Activated naive CD8-positive, alpha-beta T cell treated with anti-CD3 and anti-CD28 coated beads, Interleukin-2, amount 10 ng/mL, durations not matched to agents 7 days and 5 days (primary cell): ENCODE measurements at regions of chr16 and their contacts with region 1.

Region 1: DNA sequence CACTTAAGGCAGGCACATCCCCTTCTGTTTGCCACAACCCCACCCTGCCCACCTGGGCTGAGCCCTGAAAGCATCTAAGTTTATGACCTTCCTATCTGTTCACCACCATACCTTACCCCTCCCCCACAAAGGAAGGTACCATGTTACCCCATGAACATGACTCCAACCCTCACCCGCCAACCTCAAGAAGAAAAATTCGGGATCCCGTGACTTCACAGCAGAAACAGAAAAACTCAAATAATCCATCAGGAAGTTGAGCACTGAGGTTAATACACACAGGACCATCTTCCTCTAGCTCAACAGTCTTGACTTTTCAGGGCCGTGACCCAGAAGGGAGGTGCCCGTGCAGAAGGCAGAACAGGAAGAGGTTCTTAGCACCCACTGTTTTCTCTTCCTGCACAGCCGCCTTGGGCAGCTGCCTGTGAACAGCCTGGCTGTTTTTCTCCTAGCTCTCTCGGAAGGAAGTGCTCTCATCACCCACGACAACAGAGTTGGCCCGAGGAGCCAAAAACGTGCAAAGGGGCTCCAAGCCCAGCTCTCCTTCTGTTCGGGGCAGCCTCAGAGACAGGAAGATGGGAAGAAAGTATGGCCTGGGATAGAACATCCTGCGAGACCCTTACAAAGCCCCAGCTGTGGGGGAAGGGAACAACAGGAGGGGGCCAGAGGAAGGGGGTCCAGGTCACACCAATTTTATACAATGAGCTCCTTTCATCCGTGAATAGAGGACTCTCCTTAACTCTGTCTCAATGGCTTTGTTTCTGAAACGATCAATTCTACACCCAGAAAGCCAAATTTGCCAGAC is 101.1 kb downstream of the XYLT1 start:
- DNase-seq: peak; percentile 69
- ATAC-seq: peak; percentile 84
- H3K4me3 Mint-ChIP-seq: peak overlapping the region; percentile 79
- H3K27ac Mint-ChIP-seq: peak overlapping the region; percentile 95
- H3K4me1 Mint-ChIP-seq: peaks cover 77% of the 10 kb centered on the region
- H3K27me3 Mint-ChIP-seq: no peaks in the 10 kb centered on the region

Region 2: DNA sequence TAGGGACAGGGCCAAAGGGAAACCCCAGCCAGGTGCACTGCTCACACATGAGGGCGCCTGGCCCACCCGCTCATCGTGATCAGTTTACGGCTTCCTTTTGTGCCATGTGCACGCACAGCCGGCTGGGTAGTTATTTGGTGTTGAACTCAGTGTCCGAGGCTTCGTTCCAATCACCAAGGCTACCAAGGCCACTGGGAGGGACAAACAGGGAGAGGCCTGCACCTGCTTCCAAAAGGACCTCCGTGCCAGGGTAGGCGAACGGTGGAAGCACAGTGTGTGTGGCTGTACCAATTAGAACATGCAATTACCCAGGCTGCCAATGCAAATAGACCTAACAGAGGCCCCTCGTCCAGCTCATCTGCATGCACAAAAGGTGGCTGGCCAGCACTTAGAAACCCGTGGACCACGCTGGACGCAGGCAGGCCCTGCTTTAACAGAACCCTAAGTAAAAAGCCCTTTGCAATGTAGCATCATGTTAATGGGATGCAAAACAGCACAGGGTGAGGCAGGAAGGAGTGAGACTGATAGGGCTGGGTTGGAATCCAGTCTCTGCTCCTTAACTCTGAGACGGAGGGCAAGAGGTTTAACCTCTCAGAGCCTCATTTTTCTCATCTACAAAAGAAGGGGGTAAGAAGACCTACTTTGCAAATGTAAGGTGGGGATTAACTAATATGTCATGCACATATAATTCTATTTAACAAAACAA is 102.9 kb before region 1 on chr16:
- POLR2A ChIA-PET with region 1: no interaction called
- DNase-seq: no peak
- ATAC-seq: no peak
- H3K4me3 Mint-ChIP-seq: no peak overlapping the region
- H3K27ac Mint-ChIP-seq: no peak overlapping the region
- H3K4me1 Mint-ChIP-seq: peaks cover 29% of the 10 kb centered on the region
- H3K27me3 Mint-ChIP-seq: no peaks in the 10 kb centered on the region

Region 3: DNA sequence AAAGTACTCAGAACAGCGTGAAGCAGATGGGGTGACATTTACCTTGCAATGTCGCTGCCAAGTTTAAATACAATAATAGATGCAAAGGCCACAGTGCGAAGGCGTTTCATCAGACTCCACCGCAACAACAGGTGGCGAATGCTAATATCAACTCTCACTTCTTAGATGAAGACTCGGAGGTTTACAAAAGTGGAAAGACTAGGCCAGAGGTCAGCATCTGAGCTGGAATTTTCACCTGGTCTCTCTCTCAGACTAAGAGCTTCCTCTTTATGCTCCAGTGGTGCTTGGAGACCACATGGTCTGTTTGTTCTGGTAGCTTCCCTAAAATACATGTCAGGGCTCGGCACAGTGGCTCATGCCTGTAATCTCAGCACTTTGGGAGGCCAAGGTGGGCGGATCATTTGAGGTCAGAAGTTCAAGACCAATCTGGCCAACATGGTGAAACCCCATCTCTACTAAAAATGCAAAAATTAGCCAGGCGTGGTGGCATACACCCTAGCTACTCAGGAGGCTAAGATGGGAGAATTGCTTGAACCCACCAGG is 68.0 kb before region 1 on chr16:
- POLR2A ChIA-PET with region 1: no interaction called
- DNase-seq: no peak
- ATAC-seq: no peak
- H3K4me3 Mint-ChIP-seq: no peak overlapping the region
- H3K27ac Mint-ChIP-seq: peak overlapping the region; percentile 51
- H3K4me1 Mint-ChIP-seq: peaks cover 61% of the 10 kb centered on the region
- H3K27me3 Mint-ChIP-seq: no peaks in the 10 kb centered on the region

Region 4: DNA sequence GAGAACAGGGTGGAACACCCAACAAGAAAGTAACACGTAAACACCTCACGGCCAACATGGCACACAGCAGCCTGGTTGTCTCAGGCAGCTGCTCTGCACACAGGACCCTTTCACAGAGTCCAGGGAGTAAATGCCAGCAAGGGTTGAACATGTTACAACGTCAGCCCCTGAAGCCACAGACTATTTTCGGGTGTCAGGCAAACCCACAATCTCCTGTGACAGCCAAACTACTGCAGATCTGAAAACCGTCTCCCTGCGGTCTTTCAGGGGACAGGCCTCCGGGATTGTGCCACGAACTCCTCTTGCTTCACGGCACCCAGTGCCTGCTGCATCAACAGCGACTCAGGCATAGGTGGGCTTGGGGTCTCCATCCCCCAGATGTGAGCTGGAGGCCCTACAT is 26.6 kb before region 1 on chr16:
- POLR2A ChIA-PET with region 1: interaction called, 216 read pairs
- DNase-seq: peak; percentile 64
- ATAC-seq: peak; percentile 48
- H3K4me3 Mint-ChIP-seq: peak overlapping the region; percentile 73
- H3K27ac Mint-ChIP-seq: peak overlapping the region; percentile 96
- H3K4me1 Mint-ChIP-seq: peaks cover 82% of the 10 kb centered on the region
- H3K27me3 Mint-ChIP-seq: no peaks in the 10 kb centered on the region

Region 5: GRCh38 chr16:17416461-17417311 is 47.1 kb after region 1 on chr16:
- POLR2A ChIA-PET with region 1: interaction called, 24 read pairs
- DNase-seq: peak; percentile 58
- ATAC-seq: peak; percentile 93
- H3K4me3 Mint-ChIP-seq: peak overlapping the region; percentile 81
- H3K27ac Mint-ChIP-seq: peak overlapping the region; percentile 94
- H3K4me1 Mint-ChIP-seq: peaks cover 45% of the 10 kb centered on the region
- H3K27me3 Mint-ChIP-seq: no peaks in the 10 kb centered on the region

Region 6: GRCh38 chr16:17448640-17449638 is 79.3 kb after region 1 on chr16:
- POLR2A ChIA-PET with region 1: interaction called, 14 read pairs
- DNase-seq: peak; percentile 56
- ATAC-seq: peak; percentile 91
- H3K4me3 Mint-ChIP-seq: peak overlapping the region; percentile 66
- H3K27ac Mint-ChIP-seq: peak overlapping the region; percentile 94
- H3K4me1 Mint-ChIP-seq: peaks cover 43% of the 10 kb centered on the region
- H3K27me3 Mint-ChIP-seq: no peaks in the 10 kb centered on the region

Region 7: GRCh38 chr16:17467923-17468540 is 98.4 kb after region 1 on chr16:
- POLR2A ChIA-PET with region 1: interaction called, 25 read pairs
- DNase-seq: peak; percentile 50
- ATAC-seq: peak; percentile 48
- H3K4me3 Mint-ChIP-seq: peak overlapping the region; percentile 93
- H3K27ac Mint-ChIP-seq: peak overlapping the region; percentile 32
- H3K4me1 Mint-ChIP-seq: peaks cover 40% of the 10 kb centered on the region
- H3K27me3 Mint-ChIP-seq: no peaks in the 10 kb centered on the region

Region 8: GRCh38 chr16:17511340-17511739 is 141.7 kb after region 1 on chr16:
- POLR2A ChIA-PET with region 1: no interaction called
- DNase-seq: no peak
- ATAC-seq: no peak
- H3K4me3 Mint-ChIP-seq: no peak overlapping the region
- H3K27ac Mint-ChIP-seq: no peak overlapping the region
- H3K4me1 Mint-ChIP-seq: no peaks in the 10 kb centered on the region
- H3K27me3 Mint-ChIP-seq: peaks cover 29% of the 10 kb centered on the region